Activated CD4-positive, alpha-beta T cell treated with anti-CD3 and anti-CD28 coated beads for 36 hours (primary cell): ENCODE measurements at regions of chr1 and their contacts with region 1.

Region 1: DNA sequence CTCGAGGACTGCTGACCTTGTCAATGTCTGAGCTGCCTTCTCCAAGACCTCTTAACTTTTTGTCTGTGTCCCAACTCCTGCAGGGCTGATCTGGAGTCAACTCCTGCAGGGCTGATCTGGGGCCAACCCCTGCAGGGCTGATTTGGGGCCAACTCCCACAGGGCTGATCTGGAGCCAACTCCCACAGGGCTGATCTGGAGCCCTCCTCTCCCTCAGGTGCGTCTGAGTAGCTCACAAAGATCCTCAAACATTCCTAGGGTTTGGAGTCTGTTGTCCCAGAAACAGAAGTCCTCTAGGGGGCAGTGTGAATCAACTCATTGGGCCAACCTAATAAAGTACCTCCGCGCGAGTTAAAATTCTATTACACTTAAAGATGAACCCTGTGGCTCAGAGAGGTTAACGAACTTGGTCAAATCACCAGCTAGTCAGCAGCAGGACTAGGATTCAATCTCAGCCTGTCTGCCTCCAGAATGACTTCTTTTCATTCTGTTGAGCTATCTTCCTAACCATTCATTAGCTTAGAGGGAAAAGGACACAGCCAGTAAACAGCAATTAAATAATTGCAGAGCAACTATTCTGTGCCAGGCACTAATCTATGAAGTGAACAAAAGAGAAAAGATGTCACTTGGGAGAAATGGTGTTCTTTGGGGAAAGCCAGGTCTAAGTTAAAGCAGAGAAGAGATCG is 17.2 kb upstream of the RLF start:
- DNase-seq: peak; percentile 67
- ATAC-seq: peak; percentile 86
- H3K4me3 Mint-ChIP-seq: no peak overlapping the region
- H3K27ac Mint-ChIP-seq: no peak overlapping the region
- H3K4me1 Mint-ChIP-seq: peaks cover 10% of the 10 kb centered on the region
- H3K27me3 Mint-ChIP-seq: peaks cover 22% of the 10 kb centered on the region

Region 2: GRCh38 chr1:40004857-40005256 is 139.2 kb before region 1 on chr1:
- CTCF ChIA-PET with region 1: no interaction called
- POLR2A ChIA-PET with region 1: no interaction called
- intact Hi-C with region 1: no loop called
- DNase-seq: no peak
- ATAC-seq: no peak
- H3K4me3 Mint-ChIP-seq: no peak overlapping the region
- H3K27ac Mint-ChIP-seq: no peak overlapping the region
- H3K4me1 Mint-ChIP-seq: no peaks in the 10 kb centered on the region
- H3K27me3 Mint-ChIP-seq: no peaks in the 10 kb centered on the region

Region 3: GRCh38 chr1:40185951-40186864 is 42.2 kb after region 1 on chr1:
- CTCF ChIA-PET with region 1: interaction called, 11 read pairs
- POLR2A ChIA-PET with region 1: no interaction called
- intact Hi-C with region 1: no loop called
- DNase-seq: peak; percentile 74
- ATAC-seq: peak; percentile 96
- H3K4me3 Mint-ChIP-seq: no peak overlapping the region
- H3K27ac Mint-ChIP-seq: peak overlapping the region; percentile 51
- H3K4me1 Mint-ChIP-seq: peaks cover 51% of the 10 kb centered on the region
- H3K27me3 Mint-ChIP-seq: no peaks in the 10 kb centered on the region

Region 4: GRCh38 chr1:40338745-40339424 is 194.9 kb after region 1 on chr1:
- CTCF ChIA-PET with region 1: interaction called, 57 read pairs
- POLR2A ChIA-PET with region 1: no interaction called
- intact Hi-C with region 1: loop called (anchors 1 kb)
- DNase-seq: peak; percentile 94
- ATAC-seq: peak; percentile 85
- H3K4me3 Mint-ChIP-seq: peak overlapping the region; percentile 14
- H3K27ac Mint-ChIP-seq: peak overlapping the region; percentile 69
- H3K4me1 Mint-ChIP-seq: peaks cover 42% of the 10 kb centered on the region
- H3K27me3 Mint-ChIP-seq: no peaks in the 10 kb centered on the region

Region 5: GRCh38 chr1:40438391-40439015 is 294.5 kb after region 1 on chr1:
- CTCF ChIA-PET with region 1: interaction called, 8 read pairs
- POLR2A ChIA-PET with region 1: no interaction called
- intact Hi-C with region 1: loop called in 1 of 2 experiments (anchors 1 kb)
- DNase-seq: peak; percentile 34
- ATAC-seq: peak; percentile 58
- H3K4me3 Mint-ChIP-seq: no peak overlapping the region
- H3K27ac Mint-ChIP-seq: no peak overlapping the region
- H3K4me1 Mint-ChIP-seq: peaks cover 3% of the 10 kb centered on the region
- H3K27me3 Mint-ChIP-seq: no peaks in the 10 kb centered on the region

Region 6: GRCh38 chr1:40668769-40669525 is 524.9 kb after region 1 on chr1:
- CTCF ChIA-PET with region 1: no interaction called
- POLR2A ChIA-PET with region 1: no interaction called
- intact Hi-C with region 1: loop called in 1 of 2 experiments (anchors 5 kb)
- DNase-seq: peak; percentile 92
- ATAC-seq: peak; percentile 58
- H3K4me3 Mint-ChIP-seq: peak overlapping the region; percentile 46
- H3K27ac Mint-ChIP-seq: no peak overlapping the region
- H3K4me1 Mint-ChIP-seq: peaks cover 14% of the 10 kb centered on the region
- H3K27me3 Mint-ChIP-seq: no peaks in the 10 kb centered on the region

Region 7: DNA sequence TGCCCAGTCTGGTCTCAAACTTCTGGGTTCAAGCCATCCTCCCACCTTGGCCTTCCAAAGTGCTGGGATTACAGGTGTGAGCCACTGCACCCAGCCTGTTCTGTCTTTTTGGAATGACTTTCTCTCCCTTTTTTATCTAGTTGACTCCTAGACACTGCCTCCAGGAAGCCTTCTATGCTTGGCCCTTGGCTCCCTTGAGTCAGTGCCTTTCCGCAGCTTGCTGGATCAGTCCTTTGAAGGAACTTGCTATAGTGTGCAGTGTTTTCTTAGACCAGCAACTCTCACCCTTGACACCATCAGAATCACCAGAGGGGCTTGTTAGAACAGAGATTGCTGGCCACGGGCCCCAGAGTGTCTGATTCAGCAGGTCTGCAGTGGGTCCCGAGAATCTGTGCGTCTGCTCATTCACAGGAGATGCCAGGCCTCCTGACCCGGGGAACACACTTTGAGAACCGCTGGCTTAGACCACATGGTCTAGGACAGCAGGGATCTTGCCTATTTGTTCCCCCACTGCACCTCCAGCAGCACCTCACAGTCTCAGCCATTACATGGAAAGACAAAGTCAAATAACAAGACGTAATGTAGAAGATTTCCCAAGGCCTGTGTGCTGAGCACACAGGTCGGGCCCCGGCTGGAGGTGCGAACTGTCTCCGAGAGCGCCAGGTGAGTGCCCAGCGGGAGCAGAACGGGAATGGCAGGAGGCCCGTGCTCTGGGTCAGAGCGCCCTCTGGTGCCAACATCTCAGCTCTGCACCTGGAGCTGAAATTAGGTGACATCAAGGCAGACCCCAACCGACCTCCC is 808.1 kb after region 1 on chr1:
- CTCF ChIA-PET with region 1: no interaction called
- POLR2A ChIA-PET with region 1: no interaction called
- intact Hi-C with region 1: loop called in 1 of 2 experiments (anchors 5 kb)
- DNase-seq: peak; percentile 75
- ATAC-seq: peak; percentile 72
- H3K4me3 Mint-ChIP-seq: no peak overlapping the region
- H3K27ac Mint-ChIP-seq: no peak overlapping the region
- H3K4me1 Mint-ChIP-seq: no peaks in the 10 kb centered on the region
- H3K27me3 Mint-ChIP-seq: peaks cover 25% of the 10 kb centered on the region

Region 8: DNA sequence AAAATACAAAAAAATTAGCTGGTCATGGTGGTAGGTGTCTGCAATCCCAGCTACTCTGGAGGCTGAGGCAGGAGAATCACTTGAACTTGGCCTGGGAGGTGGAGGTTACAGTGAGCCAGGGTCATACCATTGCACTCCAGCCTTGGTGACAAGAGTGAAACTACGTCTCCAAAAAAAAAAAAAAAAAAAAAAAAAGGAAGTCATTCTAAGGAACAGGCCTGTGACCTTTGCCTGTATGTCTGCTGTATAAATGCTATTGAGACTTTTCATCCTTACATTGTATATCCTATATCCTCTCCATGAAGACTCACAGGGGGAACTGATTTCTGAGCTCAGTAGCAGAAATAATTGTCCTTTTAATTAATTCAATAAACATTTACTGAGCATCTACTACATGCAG is 827.9 kb after region 1 on chr1:
- CTCF ChIA-PET with region 1: no interaction called
- POLR2A ChIA-PET with region 1: no interaction called
- intact Hi-C with region 1: no loop called
- DNase-seq: no peak
- ATAC-seq: no peak
- H3K4me3 Mint-ChIP-seq: no peak overlapping the region
- H3K27ac Mint-ChIP-seq: no peak overlapping the region
- H3K4me1 Mint-ChIP-seq: peaks cover 4% of the 10 kb centered on the region
- H3K27me3 Mint-ChIP-seq: no peaks in the 10 kb centered on the region